ENCODE measurements at regions of chr12 and their contacts with region 1.

Region 1: GRCh38 chr12:48542300-48542928 is 17.0 kb downstream of the OR8S1 start:
- DNase-seq: peak; percentile 59

Region 2: DNA sequence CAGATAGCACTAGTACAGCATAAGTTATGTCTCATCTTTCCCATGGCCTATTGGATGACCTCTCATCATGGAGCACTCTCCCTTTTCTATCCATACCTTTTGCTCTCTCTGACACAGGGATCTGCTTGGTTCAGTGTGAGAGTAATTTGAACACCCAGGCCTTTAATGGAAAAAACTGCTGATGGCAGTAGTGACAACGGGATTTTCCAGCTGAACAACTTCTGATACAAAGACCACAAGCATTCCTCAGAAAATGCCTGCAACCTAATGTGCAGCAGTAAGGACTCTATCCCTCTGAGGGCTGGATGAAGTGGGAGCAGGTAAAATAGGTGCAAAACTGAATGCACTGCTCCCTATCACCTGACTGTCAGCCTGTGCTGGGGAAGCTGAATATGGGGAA is 88.6 kb after region 1 on chr12:
- in situ Hi-C with region 1: loop called (anchors 25 kb)
- DNase-seq: no peak

Measured in KBM-7 (cell line).